Activated CD4-positive, alpha-beta memory T cell treated with anti-CD3 and anti-CD28 coated beads for 36 hours (primary cell): ENCODE measurements at regions of chr3 and their contacts with region 1.

Region 1: DNA sequence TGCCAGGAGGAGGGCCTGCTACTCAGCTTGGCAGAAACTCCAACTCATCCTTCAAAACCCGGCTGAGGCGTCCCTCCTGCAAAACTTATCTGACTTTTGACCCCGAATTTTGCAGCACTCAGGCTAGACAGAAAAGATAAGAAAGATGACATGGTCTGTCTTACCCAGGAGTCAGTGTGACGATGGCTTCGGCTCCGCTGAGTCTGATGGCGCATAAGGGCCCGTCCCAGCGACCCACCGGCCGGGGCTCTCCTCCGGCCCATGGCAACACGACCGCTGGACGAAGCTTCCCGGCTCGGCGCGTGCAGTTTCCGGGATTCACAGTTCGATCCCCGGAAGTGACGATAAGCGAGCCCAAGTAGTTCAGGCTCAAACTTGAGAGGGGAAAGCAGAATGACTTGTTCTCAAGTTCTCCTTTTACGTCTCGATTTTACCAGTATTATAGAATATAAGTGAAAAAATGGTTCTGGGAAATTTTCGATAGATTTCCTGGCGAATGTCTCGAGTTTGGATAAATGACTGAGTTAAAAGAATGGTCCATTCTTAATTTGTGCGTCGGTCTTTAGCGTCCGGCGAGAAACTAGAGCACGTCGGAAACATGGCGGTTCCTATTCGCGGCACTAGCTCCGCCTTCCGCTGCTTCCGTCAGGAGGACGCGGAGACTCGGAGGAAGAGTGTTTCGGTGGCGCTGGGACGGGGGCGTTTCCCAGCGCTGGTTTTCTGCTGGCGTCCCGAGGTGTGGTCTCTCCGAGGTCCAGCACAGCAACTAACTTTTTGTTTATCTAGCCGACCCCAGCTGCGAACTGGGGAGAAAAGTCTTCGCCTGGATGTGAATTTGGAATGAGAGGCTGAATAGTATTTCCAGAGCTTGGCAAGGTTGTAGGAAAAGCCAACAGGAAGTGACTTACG is at the start of gene LSG1:
- DNase-seq: peak; percentile 93
- H3K4me3 Mint-ChIP-seq: peak within 1 kb of the TSS; percentile 98
- H3K27ac Mint-ChIP-seq: peak within 1 kb of the TSS; percentile 94
- H3K4me1 Mint-ChIP-seq: peaks cover 59% of the 10 kb centered on the region
- H3K27me3 Mint-ChIP-seq: peaks cover 2% of the 10 kb centered on the region
- total RNA-seq, gene LSG1: 34.6 to 35.3 TPM

Region 2: GRCh38 chr3:194095464-194095863 is 576.7 kb before region 1 on chr3:
- CTCF ChIA-PET with region 1: no interaction called
- POLR2A ChIA-PET with region 1: no interaction called
- intact Hi-C with region 1: no loop called
- DNase-seq: no peak
- H3K4me3 Mint-ChIP-seq: no peak overlapping the region
- H3K27ac Mint-ChIP-seq: no peak overlapping the region
- H3K4me1 Mint-ChIP-seq: peaks cover 12% of the 10 kb centered on the region
- H3K27me3 Mint-ChIP-seq: no peaks in the 10 kb centered on the region

Region 3: DNA sequence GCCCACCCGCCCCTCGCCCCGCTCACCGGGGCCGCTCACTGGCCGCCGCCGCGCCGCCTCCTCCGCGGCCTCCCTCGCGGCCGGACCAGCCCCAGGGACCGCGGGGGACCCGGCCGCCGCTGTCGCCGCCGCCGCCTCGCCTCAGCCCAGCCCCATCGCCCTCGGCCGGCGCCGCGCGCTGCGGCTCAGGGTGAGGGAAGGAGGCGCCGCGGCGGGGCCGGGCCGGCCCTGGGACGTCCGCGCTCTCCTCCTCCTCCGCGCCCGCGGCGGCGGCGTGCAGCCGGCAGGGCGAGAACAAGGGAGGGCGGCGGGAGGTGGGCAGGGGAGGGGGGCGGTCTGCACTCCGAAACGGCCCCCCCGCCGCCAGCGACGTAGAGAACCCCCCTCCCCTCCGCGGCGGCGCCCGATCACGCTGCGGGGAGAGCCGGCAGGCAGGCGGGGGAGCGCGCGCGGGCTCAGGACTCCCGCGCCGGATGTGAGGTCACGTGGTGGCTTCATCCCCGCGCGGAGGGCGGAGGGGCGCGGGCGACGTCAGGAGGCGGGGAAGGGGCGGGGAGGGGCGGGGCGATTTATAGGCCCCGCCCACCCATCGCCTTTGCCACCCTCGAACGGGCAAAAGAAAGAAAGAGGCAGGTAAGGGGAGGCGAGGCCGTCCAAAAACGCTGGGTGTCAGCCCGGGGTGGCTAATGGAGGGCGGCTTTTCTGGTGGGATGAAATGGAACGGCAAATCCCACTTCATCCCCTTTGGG is 185.4 kb before region 1 on chr3 and contains the start of gene ATP13A3:
- CTCF ChIA-PET with region 1: no interaction called
- POLR2A ChIA-PET with region 1: no interaction called
- intact Hi-C with region 1: loop called (anchors 2 kb)
- DNase-seq: peak; percentile 92
- H3K4me3 Mint-ChIP-seq: peak within 1 kb of the TSS; percentile 92
- H3K27ac Mint-ChIP-seq: peak within 1 kb of the TSS; percentile 95
- H3K4me1 Mint-ChIP-seq: peaks cover 58% of the 10 kb centered on the region
- H3K27me3 Mint-ChIP-seq: no peaks in the 10 kb centered on the region
- total RNA-seq, gene ATP13A3: 136 to 145 TPM

Region 4: DNA sequence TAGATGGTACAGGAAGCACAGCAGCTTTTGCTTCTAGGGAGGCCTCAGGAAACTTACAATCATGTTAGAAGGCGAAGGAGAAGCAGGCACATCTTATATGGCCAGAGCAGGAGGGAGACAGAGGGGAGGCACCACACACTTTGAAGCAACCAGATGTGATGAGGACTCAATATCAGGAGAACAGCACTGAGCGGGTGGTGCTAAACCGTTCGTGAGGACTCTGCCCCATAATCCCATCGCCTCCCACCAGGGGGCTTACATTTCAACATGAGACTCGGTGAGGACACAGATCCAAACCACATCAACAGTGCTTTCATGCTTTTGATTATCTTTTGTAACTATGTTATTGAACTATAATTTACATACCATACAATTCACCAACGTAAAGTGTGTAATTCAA is 31.3 kb before region 1 on chr3:
- CTCF ChIA-PET with region 1: interaction called, 12 read pairs
- POLR2A ChIA-PET with region 1: interaction called, 3 read pairs
- intact Hi-C with region 1: no loop called
- DNase-seq: peak; percentile 37
- H3K4me3 Mint-ChIP-seq: no peak overlapping the region
- H3K27ac Mint-ChIP-seq: no peak overlapping the region
- H3K4me1 Mint-ChIP-seq: peaks cover 7% of the 10 kb centered on the region
- H3K27me3 Mint-ChIP-seq: no peaks in the 10 kb centered on the region

Region 5: DNA sequence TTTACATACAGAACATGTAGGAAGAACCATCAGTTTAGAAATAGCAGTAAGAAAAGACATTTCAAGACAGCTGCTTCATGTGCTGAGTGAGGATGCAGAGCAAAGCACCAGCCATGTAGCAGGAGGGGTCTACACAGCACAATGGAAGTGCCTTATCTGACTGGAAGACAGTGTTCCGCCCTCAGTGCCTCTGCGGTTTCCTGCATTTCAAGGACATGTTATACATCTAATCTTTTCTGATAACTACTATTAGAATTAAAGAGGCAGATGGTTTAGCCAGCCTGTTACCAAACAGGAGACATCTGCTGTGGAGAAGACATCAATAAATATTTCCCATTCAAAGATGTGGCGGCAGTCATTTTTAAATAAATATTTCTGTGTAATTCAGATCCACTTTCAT is 10.8 kb before region 1 on chr3:
- CTCF ChIA-PET with region 1: interaction called, 49 read pairs
- POLR2A ChIA-PET with region 1: interaction called, 3 read pairs
- intact Hi-C with region 1: no loop called
- DNase-seq: no peak
- H3K4me3 Mint-ChIP-seq: no peak overlapping the region
- H3K27ac Mint-ChIP-seq: no peak overlapping the region
- H3K4me1 Mint-ChIP-seq: peaks cover 17% of the 10 kb centered on the region
- H3K27me3 Mint-ChIP-seq: no peaks in the 10 kb centered on the region

Region 6: GRCh38 chr3:195106418-195106906 is 434.3 kb after region 1 on chr3:
- CTCF ChIA-PET with region 1: interaction called, 23 read pairs
- POLR2A ChIA-PET with region 1: no interaction called
- intact Hi-C with region 1: no loop called
- DNase-seq: peak; percentile 71
- H3K4me3 Mint-ChIP-seq: no peak overlapping the region
- H3K27ac Mint-ChIP-seq: no peak overlapping the region
- H3K4me1 Mint-ChIP-seq: peaks cover 4% of the 10 kb centered on the region
- H3K27me3 Mint-ChIP-seq: no peaks in the 10 kb centered on the region